Adrenal gland (tissue), 19 donors: ENCODE measurements at regions of chr6 and their contacts with region 1.

Region 1: GRCh38 chr6:4125936-4126864 is 9.2 kb downstream of the ECI2 start:
- DNase-seq: peak in 4 of 7 donors; percentile 33 to 53 (median 46)
- H3K4me3 ChIP-seq: no peak overlapping the region
- H3K27ac ChIP-seq: peak overlapping the region in 3 of 5 donors; percentile 2 to 73 (median 63)
- H3K4me1 ChIP-seq: peaks cover 7 to 11% of the 10 kb centered on the region in 2 donors
- H3K27me3 ChIP-seq: no peaks in the 10 kb centered on the region
- CTCF ChIP-seq: peak in 5 of 6 experiments; percentile 40 to 57 (median 53)
- POLR2A ChIP-seq: no peak

Region 2: DNA sequence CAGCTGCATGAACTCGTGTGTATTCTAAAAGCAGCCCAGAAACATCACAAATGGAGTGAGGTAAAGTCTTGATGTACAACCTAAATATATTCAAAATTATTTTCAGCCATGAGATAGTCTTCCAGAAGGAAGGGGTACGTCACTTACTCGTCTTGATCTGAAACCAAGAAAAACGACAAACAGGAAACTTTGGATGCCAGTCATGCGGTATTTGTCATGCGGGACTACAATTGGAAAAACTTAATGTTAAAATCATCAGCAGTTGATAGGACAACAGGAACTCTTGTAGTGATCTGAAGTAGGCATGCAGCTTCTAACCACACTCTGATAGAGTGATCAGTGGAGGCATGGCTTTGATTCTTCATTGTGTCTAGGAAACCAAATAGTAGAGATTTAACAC is 77.0 kb before region 1 on chr6:
- intact Hi-C with region 1: loop called in 1 of 2 experiments (anchors 5 kb)
- DNase-seq: no peak
- H3K4me3 ChIP-seq: no peak overlapping the region
- H3K27ac ChIP-seq: no peak overlapping the region
- H3K4me1 ChIP-seq: no peaks in the 10 kb centered on the region
- H3K27me3 ChIP-seq: no peaks in the 10 kb centered on the region
- CTCF ChIP-seq: no peak
- POLR2A ChIP-seq: no peak